GM18951 (cell line): ENCODE measurements at regions of chr11 and their contacts with region 1.

Region 1: DNA sequence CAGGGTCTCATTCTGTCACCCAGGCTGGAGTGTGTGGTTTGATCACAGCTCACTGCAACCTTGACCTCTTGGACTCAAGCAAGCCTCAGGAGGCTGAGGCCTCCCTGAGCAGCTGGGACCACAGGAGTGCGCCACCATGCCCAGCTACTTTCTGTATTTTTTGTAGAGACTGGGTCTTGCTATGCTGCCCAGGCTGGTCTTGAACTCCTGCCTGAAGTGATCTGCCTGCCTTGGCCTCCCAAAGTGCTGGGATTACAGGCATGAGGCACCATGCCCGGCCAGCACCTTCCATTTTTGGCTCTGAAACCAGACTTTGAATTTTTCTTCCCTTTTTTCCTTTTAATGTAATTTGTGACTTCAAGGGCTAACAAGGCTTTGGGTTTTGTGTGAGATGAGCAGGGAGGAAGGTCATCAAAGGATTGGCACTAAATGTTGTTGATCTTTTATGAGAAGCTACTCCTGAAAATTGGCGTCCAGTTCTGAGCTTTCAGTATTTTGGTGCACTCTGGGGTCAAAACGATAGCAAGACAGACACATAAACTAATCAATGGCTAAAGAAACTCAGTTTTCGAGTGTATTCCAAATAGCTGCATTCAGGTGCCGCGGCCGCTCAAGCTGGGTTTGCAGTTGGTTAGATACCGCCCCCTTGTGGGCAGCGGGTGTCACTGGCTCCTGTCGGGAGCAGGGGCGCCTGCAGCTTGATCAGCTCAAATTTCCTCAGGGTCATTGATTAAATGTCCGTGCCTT is 51.9 kb upstream of the CLMP start:
- POLR2A ChIP-seq: no peak

Region 2: DNA sequence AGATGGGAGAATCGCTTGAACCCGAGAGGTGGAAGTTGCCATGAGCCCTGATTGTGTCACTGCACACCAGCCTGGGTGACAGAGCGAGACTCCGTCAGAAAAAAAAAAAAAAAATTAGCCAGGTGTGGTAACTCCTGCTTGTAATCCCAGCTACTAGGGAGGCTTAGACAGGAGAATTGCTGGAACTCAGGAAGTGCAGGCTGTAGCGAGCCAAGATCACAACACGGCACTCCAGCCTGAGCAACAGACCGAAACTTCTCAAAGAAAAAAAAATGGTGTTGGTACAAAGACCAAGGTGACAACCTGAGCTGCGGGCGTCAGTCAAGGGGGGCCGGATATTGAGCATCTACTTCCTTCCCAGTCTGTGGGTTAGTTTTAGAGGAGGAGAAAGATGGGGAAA is 136.6 kb before region 1 on chr11:
- in situ Hi-C with region 1: loop called (anchors 10 kb)
- POLR2A ChIP-seq: no peak

Region 3: DNA sequence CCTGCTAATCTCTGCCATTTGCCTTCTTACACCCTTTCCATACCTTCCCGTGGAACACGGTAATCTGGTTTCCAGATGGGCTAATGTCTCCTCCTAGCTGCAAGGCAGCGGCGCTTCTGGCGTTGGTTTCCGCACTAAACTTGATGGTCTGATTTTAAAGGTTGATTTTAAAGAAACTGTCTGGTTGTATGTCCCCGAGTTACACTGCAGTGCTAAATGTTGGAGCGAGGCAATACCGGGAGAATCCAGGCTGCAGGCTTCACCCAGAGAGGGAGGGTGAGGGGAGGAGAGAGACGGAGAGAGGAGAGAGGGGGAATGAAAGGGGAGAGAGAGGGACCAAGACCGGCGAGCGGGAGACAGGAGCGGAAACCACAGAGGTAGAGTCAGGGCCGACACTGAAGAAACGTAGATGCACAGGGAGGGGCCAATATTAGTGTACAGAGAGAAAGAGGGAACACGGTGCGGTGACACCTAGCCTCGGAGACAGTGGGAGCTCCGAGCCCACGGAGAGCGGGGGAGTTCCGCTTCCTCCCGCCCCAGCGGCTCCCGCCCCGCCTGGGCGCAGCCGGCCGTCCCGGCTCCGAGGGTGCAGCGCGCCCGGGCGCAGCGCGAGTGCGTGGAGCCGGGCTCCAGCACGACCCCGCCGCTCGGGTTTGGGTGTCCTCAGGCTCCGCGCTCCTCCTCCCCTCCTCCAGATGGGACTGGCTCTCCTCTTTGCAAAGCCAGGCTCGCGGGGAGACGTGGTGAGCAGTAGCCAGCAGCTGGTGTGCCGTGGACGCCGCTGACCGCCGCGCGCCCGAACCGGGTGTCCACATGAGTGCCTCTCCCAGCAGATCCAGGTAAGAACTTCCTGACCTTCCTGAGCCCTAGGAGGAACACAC is 111.3 kb after region 1 on chr11:
- in situ Hi-C with region 1: no loop called
- POLR2A ChIP-seq: no peak